ENCODE measurements at regions of chr9 and their contacts with region 1.

Region 1: DNA sequence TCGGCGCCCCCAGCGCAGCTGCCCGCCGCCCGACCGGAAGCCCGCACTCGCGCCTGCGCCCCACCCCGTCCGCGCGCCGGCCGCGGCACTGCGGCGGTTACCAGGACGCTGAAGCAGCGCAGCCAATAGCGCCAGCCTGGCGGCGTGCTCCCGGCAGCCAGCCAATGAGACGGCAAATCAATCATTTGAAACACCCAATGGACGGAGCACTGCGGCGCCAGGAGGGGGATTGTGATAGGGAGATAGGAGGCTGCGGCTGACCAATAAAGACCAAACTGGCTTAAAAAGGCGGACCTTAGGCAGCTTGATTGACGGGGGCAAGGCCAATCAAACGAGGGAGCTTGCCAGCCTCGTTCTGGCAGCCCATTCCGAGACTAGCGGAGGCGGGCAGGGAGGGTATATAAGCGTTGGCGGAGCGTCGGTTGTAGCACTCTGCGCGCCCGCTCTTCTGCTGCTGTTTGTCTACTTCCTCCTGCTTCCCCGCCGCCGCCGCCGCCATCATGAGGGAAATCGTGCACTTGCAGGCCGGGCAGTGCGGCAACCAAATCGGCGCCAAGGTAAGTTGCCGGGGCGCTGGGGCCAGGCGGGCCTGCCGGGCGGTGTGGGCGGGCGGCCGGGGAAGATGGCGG is at the start of gene TUBB4B:
- DNase-seq: peak; percentile 99
- H3K4me3 Mint-ChIP-seq: peak within 1 kb of the TSS; percentile 88
- H3K27ac Mint-ChIP-seq: peak within 1 kb of the TSS; percentile 94
- H3K4me1 Mint-ChIP-seq: peaks cover 21% of the 10 kb centered on the region
- H3K27me3 Mint-ChIP-seq: no peaks in the 10 kb centered on the region
- total RNA-seq, gene TUBB4B: 320 to 325 TPM

Region 2: DNA sequence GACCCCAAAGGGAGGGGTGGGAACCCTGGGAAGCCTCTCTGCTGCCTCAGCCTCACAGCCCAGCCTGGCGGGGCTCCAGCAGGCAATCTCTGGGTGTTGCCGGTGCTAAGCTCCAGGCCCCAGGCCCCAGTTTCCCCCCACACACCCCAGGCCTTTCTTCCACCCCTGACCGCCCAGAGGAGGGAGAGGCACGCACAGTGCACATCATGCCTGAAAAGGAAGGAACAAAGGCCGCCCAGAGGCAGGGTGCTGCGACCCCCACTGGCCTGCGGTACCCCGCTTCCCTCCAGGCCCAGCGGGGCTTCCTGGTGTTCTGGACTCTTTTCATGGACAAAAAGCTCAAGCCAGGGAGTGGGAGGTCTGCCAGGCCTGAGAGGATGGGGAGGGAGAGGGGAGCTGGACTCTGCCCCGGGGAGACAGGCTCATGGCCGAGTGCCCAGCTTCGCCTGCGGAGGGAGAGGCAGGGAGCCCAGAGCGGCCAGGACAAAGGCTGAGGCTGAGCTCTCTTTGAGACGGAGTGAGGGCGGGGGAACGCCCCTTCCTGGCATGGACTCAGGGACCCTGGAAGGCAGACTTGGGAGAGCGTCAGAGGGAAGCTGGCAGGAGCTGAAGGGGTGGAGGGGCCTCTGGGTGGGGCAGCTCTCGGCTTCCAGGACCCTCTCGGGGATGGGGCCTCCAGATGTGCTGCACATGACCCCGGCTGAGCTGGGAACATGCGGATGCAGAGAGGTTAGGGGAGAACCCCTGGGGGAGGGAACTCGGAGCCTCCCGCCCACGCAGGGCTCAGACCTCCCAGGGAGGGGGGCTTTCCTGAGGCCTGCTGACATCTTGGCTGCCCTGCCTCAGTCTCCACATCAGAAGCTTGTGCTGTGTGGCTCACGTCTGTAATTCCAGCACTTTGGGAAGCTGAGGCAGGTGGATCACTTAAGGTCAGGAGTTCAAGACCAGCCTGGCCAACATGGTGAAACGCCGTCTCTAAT is 185.3 kb before region 1 on chr9:
- CTCF ChIA-PET with region 1: no interaction called
- POLR2A ChIA-PET with region 1: no interaction called
- intact Hi-C with region 1: no loop called
- DNase-seq: no peak
- H3K4me3 Mint-ChIP-seq: no peak overlapping the region
- H3K27ac Mint-ChIP-seq: no peak overlapping the region
- H3K4me1 Mint-ChIP-seq: no peaks in the 10 kb centered on the region
- H3K27me3 Mint-ChIP-seq: peaks cover 11% of the 10 kb centered on the region

Region 3: GRCh38 chr9:137095664-137096517 is 145.1 kb before region 1 on chr9:
- CTCF ChIA-PET with region 1: interaction called, 7 read pairs
- POLR2A ChIA-PET with region 1: interaction called, 11 read pairs
- intact Hi-C with region 1: no loop called
- DNase-seq: peak; percentile 93
- H3K4me3 Mint-ChIP-seq: peak overlapping the region; percentile 62
- H3K27ac Mint-ChIP-seq: peak overlapping the region; percentile 84
- H3K4me1 Mint-ChIP-seq: peaks cover 19% of the 10 kb centered on the region
- H3K27me3 Mint-ChIP-seq: no peaks in the 10 kb centered on the region

Region 4: DNA sequence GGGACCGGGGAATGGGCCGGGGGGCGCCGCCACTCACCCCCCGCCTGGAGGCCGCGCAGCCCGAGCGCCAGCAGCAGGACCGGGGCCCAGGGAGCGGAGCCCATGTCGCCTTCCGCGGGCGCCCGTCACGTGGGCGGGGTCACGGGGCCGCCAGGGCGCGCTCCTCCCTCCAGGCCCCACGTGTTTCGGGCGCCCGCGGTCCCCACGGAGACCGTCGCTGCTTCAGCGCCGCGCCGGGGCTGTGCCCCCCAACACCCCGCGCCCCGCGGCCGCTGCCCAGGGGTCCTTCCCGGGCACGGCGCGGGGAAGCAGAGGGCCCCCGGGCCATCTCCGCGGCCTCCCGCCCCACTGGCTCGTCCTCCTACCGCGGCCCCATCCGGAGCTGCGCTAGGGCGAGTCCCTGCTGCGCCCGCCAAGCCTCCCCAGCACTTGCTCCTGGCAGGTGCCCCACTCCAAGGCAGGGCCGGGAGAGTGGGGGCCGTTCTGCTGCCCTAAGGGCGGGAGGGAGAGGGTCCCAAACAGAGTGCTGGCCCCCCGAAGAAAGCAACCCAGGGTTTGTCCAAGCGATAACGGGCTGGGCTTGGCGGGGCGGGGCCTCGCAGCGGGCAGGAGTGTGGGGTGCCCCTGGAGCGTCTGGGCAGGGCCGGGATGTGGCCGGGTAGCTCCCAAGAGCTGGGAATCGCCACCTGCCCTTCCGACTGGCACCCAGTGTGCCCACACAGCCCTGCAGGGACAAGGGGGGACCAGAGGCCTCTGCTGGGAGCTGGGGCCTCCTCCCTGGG is 126.2 kb before region 1 on chr9 and contains the start of gene DPP7:
- CTCF ChIA-PET with region 1: interaction called, 22 read pairs
- POLR2A ChIA-PET with region 1: interaction called, 7 read pairs
- intact Hi-C with region 1: no loop called
- DNase-seq: peak; percentile 82
- H3K4me3 Mint-ChIP-seq: peak within 1 kb of the TSS; percentile 70
- H3K27ac Mint-ChIP-seq: no peak within 1 kb of the TSS
- H3K4me1 Mint-ChIP-seq: peaks cover 18% of the 10 kb centered on the region
- H3K27me3 Mint-ChIP-seq: no peaks in the 10 kb centered on the region
- total RNA-seq, gene DPP7: 195 to 208 TPM

Region 5: GRCh38 chr9:137129456-137130175 is 111.4 kb before region 1 on chr9:
- CTCF ChIA-PET with region 1: interaction called, 8 read pairs
- POLR2A ChIA-PET with region 1: interaction called, 26 read pairs
- intact Hi-C with region 1: loop called (anchors 5 kb)
- DNase-seq: peak; percentile 94
- H3K4me3 Mint-ChIP-seq: peak overlapping the region; percentile 84
- H3K27ac Mint-ChIP-seq: peak overlapping the region; percentile 70
- H3K4me1 Mint-ChIP-seq: peaks cover 20% of the 10 kb centered on the region
- H3K27me3 Mint-ChIP-seq: peaks cover 2% of the 10 kb centered on the region

Region 6: DNA sequence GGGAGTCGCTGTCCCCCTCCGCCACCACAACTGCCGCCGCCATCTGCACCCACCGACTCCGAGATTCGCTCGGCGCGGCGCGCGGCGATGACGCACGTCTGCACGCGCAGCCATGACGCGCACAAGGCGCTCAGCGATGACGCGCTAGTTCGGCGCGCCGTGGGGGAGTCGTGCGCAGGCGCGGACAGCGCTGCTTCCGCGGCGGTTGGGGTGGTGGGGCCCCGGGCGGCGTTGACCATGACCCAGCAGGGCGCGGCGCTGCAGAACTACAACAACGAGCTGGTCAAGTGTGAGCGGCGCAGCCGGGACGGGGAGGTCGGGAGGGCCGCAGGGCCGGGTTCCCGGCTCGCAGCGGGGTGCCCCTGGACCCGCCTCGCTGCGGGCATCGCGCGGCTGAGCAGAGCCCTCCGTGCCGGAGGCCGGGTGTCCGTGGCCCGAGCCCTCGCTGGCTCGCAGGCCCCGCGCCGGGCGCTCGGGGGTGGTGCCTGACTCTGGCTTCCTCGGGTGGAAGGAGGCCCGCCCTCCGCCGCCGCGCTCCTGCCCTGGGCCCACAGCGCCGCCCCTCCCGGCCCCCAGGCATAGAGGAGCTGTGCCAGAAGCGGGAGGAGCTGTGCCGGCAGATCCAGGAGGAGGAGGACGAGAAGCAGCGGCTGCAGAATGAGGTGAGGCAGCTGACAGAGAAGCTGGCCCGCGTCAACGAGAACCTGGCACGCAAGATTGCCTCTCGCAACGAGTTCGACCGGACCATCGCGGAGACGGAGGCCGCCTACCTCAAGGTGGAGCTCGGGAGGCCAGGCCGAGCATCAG is 52.3 kb before region 1 on chr9 and contains the starts of genes ANAPC2 and SSNA1:
- CTCF ChIA-PET with region 1: interaction called, 13 read pairs
- POLR2A ChIA-PET with region 1: interaction called, 18 read pairs
- intact Hi-C with region 1: loop called (anchors 1 kb)
- DNase-seq: peak; percentile 95
- H3K4me3 Mint-ChIP-seq: peak within 1 kb of the TSS; percentile 97
- H3K27ac Mint-ChIP-seq: peak within 1 kb of the TSS; percentile 93
- H3K4me1 Mint-ChIP-seq: peaks cover 40% of the 10 kb centered on the region
- H3K27me3 Mint-ChIP-seq: no peaks in the 10 kb centered on the region
- total RNA-seq, gene ANAPC2: 36.3 to 36.9 TPM
- total RNA-seq, gene SSNA1: 58.9 to 62.1 TPM

Region 7: GRCh38 chr9:137200311-137201204 is 40.4 kb before region 1 on chr9 and contains the start of gene TPRN:
- CTCF ChIA-PET with region 1: interaction called, 15 read pairs
- POLR2A ChIA-PET with region 1: interaction called, 6 read pairs
- intact Hi-C with region 1: loop called (anchors 2 kb)
- DNase-seq: peak; percentile 99
- H3K4me3 Mint-ChIP-seq: peak within 1 kb of the TSS; percentile 82
- H3K27ac Mint-ChIP-seq: peak within 1 kb of the TSS; percentile 67
- H3K4me1 Mint-ChIP-seq: peaks cover 26% of the 10 kb centered on the region
- H3K27me3 Mint-ChIP-seq: no peaks in the 10 kb centered on the region
- total RNA-seq, gene TPRN: 6.1 to 6.7 TPM

Region 8: DNA sequence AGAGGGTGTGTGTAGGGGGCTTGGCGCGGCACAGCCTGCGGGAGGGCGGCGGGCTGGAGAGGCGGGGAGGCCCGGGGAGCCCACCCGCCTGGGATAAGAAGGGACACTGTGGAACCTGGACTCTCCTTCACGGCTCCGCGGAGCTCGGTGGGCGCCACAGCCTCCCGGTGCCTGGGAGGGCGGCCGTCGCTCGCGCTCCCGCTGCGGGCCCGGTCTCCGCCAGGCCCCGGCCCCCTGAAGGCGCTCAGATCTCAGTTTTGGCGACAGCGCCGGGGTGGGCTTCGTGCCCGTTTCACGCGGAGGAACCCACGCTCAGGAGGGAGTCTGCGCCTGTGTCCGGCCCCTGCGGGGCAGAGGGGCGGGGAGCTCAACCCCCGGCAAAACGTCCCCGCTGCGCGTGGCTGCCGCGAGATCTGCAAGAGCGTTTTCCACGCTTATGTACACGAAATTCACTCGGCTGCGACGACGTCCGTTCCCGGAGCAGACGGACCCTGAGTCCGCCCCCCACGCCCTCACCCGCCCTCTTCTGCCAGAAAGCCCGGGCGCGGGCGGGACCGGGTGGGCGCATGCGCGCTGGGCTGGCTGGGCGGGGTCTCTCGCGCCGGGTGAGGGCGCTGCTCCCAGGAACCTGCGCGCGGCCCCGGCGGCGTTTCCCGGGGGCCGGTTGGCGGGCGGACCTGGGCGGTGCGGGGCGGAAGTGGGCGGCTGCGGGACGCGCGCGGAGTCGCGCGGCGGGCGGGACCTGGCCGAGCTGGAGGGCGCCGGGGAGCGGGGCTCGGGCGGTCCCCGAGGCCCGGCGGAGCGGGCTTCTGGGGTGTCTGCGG is 13.9 kb after region 1 on chr9 and contains the start of gene NELFB:
- CTCF ChIA-PET with region 1: interaction called, 15 read pairs
- POLR2A ChIA-PET with region 1: interaction called, 65 read pairs
- intact Hi-C with region 1: loop called (anchors 1 kb)
- DNase-seq: peak; percentile 96
- H3K4me3 Mint-ChIP-seq: peak within 1 kb of the TSS; percentile 86
- H3K27ac Mint-ChIP-seq: peak within 1 kb of the TSS; percentile 71
- H3K4me1 Mint-ChIP-seq: peaks cover 20% of the 10 kb centered on the region
- H3K27me3 Mint-ChIP-seq: no peaks in the 10 kb centered on the region
- total RNA-seq, gene NELFB: 57.2 to 57.9 TPM

Region 9: GRCh38 chr9:137492464-137493162 is 251.6 kb after region 1 on chr9:
- CTCF ChIA-PET with region 1: no interaction called
- POLR2A ChIA-PET with region 1: no interaction called
- intact Hi-C with region 1: no loop called
- DNase-seq: peak; percentile 26
- H3K4me3 Mint-ChIP-seq: no peak overlapping the region
- H3K27ac Mint-ChIP-seq: no peak overlapping the region
- H3K4me1 Mint-ChIP-seq: no peaks in the 10 kb centered on the region
- H3K27me3 Mint-ChIP-seq: no peaks in the 10 kb centered on the region

Region 10: GRCh38 chr9:137745541-137745991 is 504.6 kb after region 1 on chr9:
- CTCF ChIA-PET with region 1: no interaction called
- POLR2A ChIA-PET with region 1: no interaction called
- intact Hi-C with region 1: no loop called
- DNase-seq: peak; percentile 59
- H3K4me3 Mint-ChIP-seq: no peak overlapping the region
- H3K27ac Mint-ChIP-seq: peak overlapping the region; percentile 69
- H3K4me1 Mint-ChIP-seq: peaks cover 14% of the 10 kb centered on the region
- H3K27me3 Mint-ChIP-seq: no peaks in the 10 kb centered on the region